ENCODE measurements at regions of chr22 and their contacts with region 1.

Region 1: GRCh38 chr22:31272522-31273446 is 19.5 kb downstream of the PIK3IP1 start:
- DNase-seq: no peak
- H3K4me3 ChIP-seq: no peak overlapping the region
- H3K27ac ChIP-seq: peak overlapping the region in 4 of 8 donors; percentile 20 to 64 (median 46)
- H3K4me1 ChIP-seq: peaks cover 0 to 11% (median 2%) of the 10 kb centered on the region in 6 donors
- H3K27me3 ChIP-seq: no peaks in the 10 kb centered on the region
- CTCF ChIP-seq: peak; percentile 53 to 82 (median 75)
- POLR2A ChIP-seq: no peak

Region 2: DNA sequence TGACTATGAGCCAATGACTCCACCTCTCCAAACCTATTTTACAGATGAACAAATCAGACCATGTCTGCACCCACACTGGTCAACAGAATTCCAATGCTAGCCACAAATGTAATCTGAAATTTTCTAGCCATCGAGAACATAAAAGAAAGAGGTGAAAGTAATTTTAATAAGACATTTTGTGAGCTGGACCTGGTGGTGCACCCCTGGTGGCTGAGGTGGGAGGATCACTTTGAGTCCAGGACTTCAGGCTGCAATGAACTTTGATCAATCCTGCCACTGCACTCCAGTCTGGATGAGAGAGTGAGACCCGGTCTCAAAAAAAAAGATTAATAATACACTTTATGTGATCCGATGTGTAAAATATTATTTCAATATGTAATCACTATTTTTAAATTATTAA is 122.2 kb before region 1 on chr22:
- intact Hi-C with region 1: no loop called
- DNase-seq: no peak
- H3K4me3 ChIP-seq: no peak overlapping the region
- H3K27ac ChIP-seq: no peak overlapping the region
- H3K4me1 ChIP-seq: peaks cover 0 to 17% (median 5%) of the 10 kb centered on the region in 6 donors
- H3K27me3 ChIP-seq: no peaks in the 10 kb centered on the region
- CTCF ChIP-seq: no peak
- POLR2A ChIP-seq: no peak

Region 3: DNA sequence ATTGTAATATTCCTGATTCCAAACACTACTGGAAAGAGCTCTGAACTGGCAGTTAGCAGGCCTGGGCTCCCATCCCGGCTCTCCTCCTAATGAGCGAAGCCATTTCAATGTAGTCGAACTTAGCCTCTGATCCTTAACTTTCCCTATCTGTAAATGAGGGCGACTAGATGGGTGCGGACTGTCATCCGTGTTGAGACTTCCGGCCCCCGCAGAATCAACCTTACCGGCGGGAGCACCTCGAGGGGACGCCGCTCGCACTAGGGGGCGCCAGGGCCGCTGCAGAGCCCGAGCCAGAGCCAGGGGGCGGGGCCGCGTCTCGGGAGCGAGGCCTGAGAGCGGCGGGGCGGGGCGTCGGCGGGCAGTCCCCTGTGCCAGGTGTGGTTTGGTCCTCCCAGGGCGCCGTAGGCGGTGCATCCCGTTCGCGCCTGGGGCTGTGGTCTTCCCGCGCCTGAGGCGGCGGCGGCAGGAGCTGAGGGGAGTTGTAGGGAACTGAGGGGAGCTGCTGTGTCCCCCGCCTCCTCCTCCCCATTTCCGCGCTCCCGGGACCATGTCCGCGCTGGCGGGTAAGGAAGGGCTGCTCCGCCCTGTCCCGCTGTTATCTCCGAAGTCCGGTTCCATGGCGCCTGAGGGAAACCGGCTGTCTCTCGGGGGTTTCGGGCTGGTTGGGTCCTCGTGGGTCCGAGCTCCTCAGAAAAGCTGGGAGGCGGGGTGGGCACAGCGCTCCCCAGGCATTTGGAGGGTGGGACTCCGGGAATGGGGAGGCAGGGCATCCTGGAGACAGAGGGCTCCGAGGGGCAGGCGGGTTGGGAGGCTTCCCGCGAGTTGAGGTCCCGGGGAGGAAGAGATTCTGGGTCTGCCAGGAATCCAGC is 60.7 kb before region 1 on chr22 and contains the start of gene LIMK2:
- intact Hi-C with region 1: loop called (anchors 10 kb)
- DNase-seq: peak; percentile 100
- H3K4me3 ChIP-seq: peak within 1 kb of the TSS; percentile 61 to 95 (median 84)
- H3K27ac ChIP-seq: peak within 1 kb of the TSS; percentile 70 to 94 (median 87)
- H3K4me1 ChIP-seq: peaks cover 22 to 71% (median 51%) of the 10 kb centered on the region in 6 donors
- H3K27me3 ChIP-seq: no peaks in the 10 kb centered on the region
- CTCF ChIP-seq: peak; percentile 78 to 97 (median 94)
- POLR2A ChIP-seq: peak; percentile 3 to 61 (median 40)
- total RNA-seq, gene LIMK2: 51.6 to 182 (median 78.1) TPM

Measured in spleen (tissue), 13 donors.